ENCODE measurements at regions of chr2 and their contacts with region 1.

Region 1: GRCh38 chr2:8152392-8153257 is 529.2 kb upstream of the ID2 start:
- DNase-seq: no peak
- H3K4me3 Mint-ChIP-seq: no peak overlapping the region
- H3K27ac Mint-ChIP-seq: peak overlapping the region; percentile 62
- H3K4me1 Mint-ChIP-seq: peaks cover 38% of the 10 kb centered on the region
- H3K27me3 Mint-ChIP-seq: no peaks in the 10 kb centered on the region

Region 2: GRCh38 chr2:7758073-7758759 is 394.4 kb before region 1 on chr2:
- intact Hi-C with region 1: loop called (anchors 5 kb)
- DNase-seq: no peak
- H3K4me3 Mint-ChIP-seq: no peak overlapping the region
- H3K27ac Mint-ChIP-seq: peak overlapping the region; percentile 76
- H3K4me1 Mint-ChIP-seq: peaks cover 22% of the 10 kb centered on the region
- H3K27me3 Mint-ChIP-seq: no peaks in the 10 kb centered on the region

Region 3: GRCh38 chr2:7984693-7985353 is 167.8 kb before region 1 on chr2:
- intact Hi-C with region 1: loop called (anchors 2 kb)
- DNase-seq: no peak
- H3K4me3 Mint-ChIP-seq: peak overlapping the region; percentile 12
- H3K27ac Mint-ChIP-seq: peak overlapping the region; percentile 82
- H3K4me1 Mint-ChIP-seq: peaks cover 28% of the 10 kb centered on the region
- H3K27me3 Mint-ChIP-seq: no peaks in the 10 kb centered on the region

Region 4: DNA sequence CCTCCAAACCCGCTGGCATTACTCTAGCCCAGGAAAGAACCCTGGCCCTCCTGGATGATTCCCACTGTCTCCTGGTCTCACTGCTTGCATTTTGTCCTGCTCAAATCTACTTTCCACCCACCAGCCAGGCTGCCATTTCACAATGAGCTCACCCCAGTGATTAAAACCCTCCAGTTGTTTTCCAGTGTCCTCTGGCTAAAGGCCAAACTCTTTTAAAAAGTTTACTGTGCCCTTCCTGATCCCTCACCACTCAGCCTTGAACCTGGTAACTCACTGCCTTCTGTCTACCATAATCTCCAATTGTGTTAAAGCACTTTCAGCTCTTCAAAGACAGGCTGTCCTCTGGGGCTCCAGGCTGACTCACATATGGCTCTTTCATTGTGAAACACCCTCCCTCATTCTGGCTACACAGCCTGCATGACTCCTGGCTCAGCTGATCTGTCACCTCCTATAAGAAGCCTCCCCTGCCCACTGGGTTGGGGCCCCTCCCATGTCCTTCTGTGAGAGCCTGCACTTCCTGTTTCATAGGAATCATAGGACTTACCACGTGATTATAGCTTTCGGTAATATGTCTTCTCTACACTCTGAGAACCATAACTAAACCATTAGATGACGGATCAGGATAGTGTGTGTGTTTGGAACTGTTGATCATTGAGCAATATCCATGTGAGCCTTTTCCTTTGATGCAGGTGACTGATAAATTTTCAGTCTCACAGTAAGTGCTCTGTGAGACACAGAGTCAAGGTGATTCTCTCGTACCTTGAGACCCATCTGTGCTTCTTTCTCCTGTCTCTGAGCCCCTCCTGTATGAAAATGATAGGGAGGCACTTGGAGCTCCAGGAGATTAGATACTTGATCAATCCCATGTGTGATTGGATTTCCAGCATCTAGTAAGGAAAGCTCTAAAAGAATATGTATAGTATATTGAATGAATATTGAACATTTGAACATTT is 61.6 kb before region 1 on chr2:
- intact Hi-C with region 1: loop called (anchors 1 kb)
- DNase-seq: peak; percentile 22
- H3K4me3 Mint-ChIP-seq: no peak overlapping the region
- H3K27ac Mint-ChIP-seq: no peak overlapping the region
- H3K4me1 Mint-ChIP-seq: peaks cover under 1% of the 10 kb centered on the region
- H3K27me3 Mint-ChIP-seq: no peaks in the 10 kb centered on the region

Region 5: DNA sequence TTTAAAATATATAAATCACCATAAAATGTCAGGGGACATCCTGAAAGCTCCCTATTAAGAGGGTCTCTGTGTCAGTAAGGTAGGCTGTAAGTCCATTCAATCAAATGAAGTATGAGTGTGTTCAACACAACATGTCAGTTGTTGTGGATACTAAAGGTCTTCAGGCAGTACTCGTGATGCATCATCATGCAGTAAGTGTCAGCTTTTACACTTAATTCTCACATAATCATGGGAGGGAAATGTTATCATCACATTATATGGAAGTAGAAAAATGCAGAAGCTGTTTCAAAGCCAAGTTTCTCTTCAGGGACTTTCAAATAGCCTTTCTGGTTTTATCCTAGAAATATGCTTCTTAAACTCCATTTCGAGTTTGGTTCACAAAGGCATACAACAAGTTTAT is 52.1 kb after region 1 on chr2:
- intact Hi-C with region 1: no loop called
- DNase-seq: no peak
- H3K4me3 Mint-ChIP-seq: no peak overlapping the region
- H3K27ac Mint-ChIP-seq: no peak overlapping the region
- H3K4me1 Mint-ChIP-seq: peaks cover 14% of the 10 kb centered on the region
- H3K27me3 Mint-ChIP-seq: peaks cover 5% of the 10 kb centered on the region

Region 6: GRCh38 chr2:8303322-8303832 is 150.8 kb after region 1 on chr2:
- intact Hi-C with region 1: loop called (anchors 2 kb)
- DNase-seq: peak; percentile 77
- H3K4me3 Mint-ChIP-seq: peak overlapping the region; percentile 65
- H3K27ac Mint-ChIP-seq: peak overlapping the region; percentile 85
- H3K4me1 Mint-ChIP-seq: peaks cover 91% of the 10 kb centered on the region
- H3K27me3 Mint-ChIP-seq: peaks cover 7% of the 10 kb centered on the region